Common myeloid progenitor, CD34-positive (primary cell): ENCODE measurements at regions of chr12 and their contacts with region 1.

Region 1: DNA sequence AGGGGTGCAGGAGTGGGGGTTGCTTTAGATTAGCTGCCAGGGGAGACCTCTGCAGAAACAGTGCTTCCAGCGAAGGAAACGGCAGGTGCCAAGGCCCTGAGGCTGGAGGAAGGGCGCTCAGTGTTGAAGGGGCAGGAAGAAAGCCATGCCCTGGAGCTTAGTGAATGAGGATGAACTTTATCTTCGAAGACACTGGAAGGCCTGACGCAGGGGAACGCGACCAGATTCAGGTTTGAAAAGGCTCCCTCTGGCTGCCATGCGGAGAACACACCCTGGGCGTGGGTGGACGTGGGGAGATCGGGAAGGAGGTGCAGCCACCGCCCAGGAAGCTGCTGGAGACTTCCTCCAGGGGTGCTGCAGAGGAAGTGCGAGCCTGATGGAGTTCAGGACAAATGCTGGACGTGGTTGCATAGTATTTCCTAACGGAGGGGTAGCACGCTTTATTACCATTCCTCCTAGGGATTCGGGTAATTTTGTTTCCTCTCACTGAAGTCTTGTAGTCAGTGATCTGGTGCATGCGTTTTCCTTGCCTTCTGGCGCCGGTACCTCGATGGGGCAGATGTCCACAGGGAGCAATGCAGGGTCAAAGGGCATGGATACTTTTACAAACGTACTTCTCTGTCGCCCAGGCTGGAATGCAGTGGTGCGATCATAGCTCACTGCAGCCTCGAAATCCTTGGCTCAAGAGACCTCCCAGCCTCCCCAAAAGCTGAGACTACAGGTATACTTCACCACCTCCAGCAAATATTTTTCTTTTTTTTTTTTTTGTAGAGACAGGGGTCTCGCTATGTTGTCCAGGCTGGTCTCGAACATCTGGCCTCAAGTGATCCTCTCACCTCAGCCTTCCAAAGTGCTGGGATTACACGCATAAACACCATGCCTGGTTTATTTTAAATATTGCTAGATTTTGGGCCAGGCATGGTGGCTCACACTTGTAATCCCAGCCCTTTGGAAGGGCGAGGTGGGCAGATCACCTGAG is 26.4 kb upstream of the UBC start:
- DNase-seq: peak; percentile 83 to 86 (median 85)
- H3K4me3 ChIP-seq: peak overlapping the region in 6 of 7 experiments; percentile 77 to 95 (median 92)
- H3K27ac ChIP-seq: peak overlapping the region in 1 of 2 experiments; percentile 89
- H3K4me1 ChIP-seq: peaks cover 16 to 40% (median 29%) of the 10 kb centered on the region in 4 experiments
- H3K27me3 ChIP-seq: no peaks in the 10 kb centered on the region

Region 2: GRCh38 chr12:124917135-124917840 is 23.6 kb before region 1 on chr12:
- CTCF ChIA-PET with region 1: interaction called, 96 read pairs
- POLR2A ChIA-PET with region 1: interaction called, 36 read pairs
- DNase-seq: peak; percentile 99
- H3K4me3 ChIP-seq: peak overlapping the region; percentile 15 to 99 (median 62)
- H3K27ac ChIP-seq: peak overlapping the region; percentile 83 to 100
- H3K4me1 ChIP-seq: peaks cover 56 to 80% (median 71%) of the 10 kb centered on the region in 4 experiments
- H3K27me3 ChIP-seq: no peaks in the 10 kb centered on the region

Region 3: DNA sequence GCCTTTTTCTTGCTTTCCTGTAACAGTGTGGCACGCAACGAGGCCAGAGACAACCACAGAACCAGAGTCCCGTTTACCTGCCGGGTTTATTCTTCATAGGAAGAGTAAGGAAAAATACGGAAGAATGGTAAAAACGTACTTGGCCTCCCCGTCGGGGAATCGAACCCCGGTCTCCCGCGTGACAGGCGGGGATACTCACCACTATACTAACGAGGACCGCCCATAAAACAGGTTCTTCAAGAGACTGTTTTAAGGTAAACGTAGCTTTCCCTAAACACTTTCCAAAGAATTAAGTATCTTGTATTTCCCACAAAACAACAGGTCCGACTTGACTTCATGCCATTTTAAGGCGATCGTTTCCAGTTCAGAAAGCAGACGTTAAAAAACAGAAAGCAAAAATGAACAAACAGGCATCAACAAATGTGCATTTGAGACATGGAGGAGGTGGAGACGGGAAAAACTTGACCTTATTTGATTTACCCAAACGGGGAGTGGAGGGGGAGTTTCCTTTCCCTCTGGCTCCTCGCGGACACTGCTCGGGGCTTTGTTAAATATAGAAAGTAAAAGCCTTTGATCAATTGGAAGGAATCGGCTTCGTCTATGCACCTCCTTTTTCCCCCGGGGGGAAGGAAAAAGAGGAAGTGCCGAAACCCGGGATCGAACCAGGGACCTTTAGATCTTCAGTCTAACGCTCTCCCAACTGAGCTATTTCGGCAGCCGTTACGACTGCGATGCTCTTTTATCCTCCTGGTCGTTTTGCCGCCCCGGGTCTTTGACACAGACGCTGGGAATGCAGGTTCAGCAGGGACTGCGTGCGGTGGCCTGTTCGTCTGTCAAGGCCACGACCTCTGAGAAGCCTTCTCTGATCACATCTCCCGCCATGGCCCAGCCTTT is 13.4 kb before region 1 on chr12:
- CTCF ChIA-PET with region 1: interaction called, 44 read pairs
- POLR2A ChIA-PET with region 1: interaction called, 23 read pairs
- DNase-seq: peak; percentile 90 to 94 (median 94)
- H3K4me3 ChIP-seq: peak overlapping the region; percentile 32 to 100 (median 94)
- H3K27ac ChIP-seq: peak overlapping the region; percentile 56 to 89
- H3K4me1 ChIP-seq: peaks cover 0 to 13% (median 6%) of the 10 kb centered on the region in 4 experiments
- H3K27me3 ChIP-seq: peaks cover 0 to 2% (median 0%) of the 10 kb centered on the region in 5 experiments

Region 4: GRCh38 chr12:124953689-124954405 is 13.0 kb after region 1 on chr12:
- CTCF ChIA-PET with region 1: interaction called, 12 read pairs
- POLR2A ChIA-PET with region 1: no interaction called
- DNase-seq: no peak
- H3K4me3 ChIP-seq: no peak overlapping the region
- H3K27ac ChIP-seq: no peak overlapping the region
- H3K4me1 ChIP-seq: no peaks in the 10 kb centered on the region
- H3K27me3 ChIP-seq: no peaks in the 10 kb centered on the region

Region 5: DNA sequence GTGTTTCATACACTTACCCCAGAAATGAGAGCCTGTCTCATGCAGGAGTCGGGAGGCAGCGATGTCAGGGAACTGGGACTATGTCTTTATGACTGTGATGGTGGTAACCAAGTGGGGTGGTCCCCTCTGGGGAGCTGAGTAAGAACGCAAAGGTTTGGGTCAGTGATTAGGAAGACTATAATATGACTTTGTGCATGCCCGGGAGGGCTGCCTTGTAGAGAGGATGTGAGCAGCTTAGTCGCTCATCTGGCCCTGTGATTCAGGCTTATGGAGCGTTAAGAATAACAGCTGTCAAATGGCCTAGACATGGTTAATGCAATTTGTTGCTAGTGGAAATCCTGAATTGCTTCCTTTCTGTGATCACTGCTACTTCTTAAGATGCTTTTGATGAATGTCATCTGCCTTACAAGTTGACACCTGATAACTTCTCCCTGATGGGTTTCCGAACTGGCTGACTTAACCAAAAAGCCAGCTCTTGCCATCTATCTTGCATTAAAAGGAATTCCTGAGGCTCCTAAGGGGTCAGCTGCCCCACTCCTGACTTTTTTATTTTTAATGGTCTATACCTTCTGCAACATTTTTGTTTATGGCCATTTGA is 89.0 kb after region 1 on chr12:
- CTCF ChIA-PET with region 1: no interaction called
- POLR2A ChIA-PET with region 1: no interaction called
- DNase-seq: no peak
- H3K4me3 ChIP-seq: no peak overlapping the region
- H3K27ac ChIP-seq: no peak overlapping the region
- H3K4me1 ChIP-seq: no peaks in the 10 kb centered on the region
- H3K27me3 ChIP-seq: no peaks in the 10 kb centered on the region

Region 6: DNA sequence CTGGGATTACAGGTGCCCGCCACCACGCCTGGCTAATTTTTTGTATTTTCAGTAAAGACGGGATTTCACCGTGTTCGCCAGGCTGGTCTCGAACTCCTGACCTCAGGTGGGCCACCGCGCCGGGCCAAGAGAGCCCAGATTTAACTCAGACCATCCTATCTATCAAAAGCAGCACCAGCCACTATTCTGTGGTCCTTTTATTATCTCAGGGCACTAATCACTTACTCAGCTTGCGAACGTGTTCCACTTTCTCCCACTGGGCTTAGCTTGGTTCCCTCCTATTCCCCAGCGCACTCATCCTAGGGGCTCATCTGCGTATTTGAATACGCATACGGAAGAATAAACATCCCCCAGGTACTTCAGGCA is 108.2 kb after region 1 on chr12:
- CTCF ChIA-PET with region 1: no interaction called
- POLR2A ChIA-PET with region 1: no interaction called
- DNase-seq: no peak
- H3K4me3 ChIP-seq: peak overlapping the region; percentile 48 to 96 (median 71)
- H3K27ac ChIP-seq: no peak overlapping the region
- H3K4me1 ChIP-seq: peaks cover 0 to 5% (median 2%) of the 10 kb centered on the region in 4 experiments
- H3K27me3 ChIP-seq: no peaks in the 10 kb centered on the region